ENCODE measurements at regions of chr11 and their contacts with region 1.

Region 1: GRCh38 chr11:122853971-122854446 is 15.7 kb downstream of the CRTAM start:
- DNase-seq: peak; percentile 31
- H3K4me3 Mint-ChIP-seq: no peak overlapping the region
- H3K27ac Mint-ChIP-seq: no peak overlapping the region
- H3K4me1 Mint-ChIP-seq: peaks cover 31% of the 10 kb centered on the region
- H3K27me3 Mint-ChIP-seq: peaks cover 31% of the 10 kb centered on the region

Region 2: DNA sequence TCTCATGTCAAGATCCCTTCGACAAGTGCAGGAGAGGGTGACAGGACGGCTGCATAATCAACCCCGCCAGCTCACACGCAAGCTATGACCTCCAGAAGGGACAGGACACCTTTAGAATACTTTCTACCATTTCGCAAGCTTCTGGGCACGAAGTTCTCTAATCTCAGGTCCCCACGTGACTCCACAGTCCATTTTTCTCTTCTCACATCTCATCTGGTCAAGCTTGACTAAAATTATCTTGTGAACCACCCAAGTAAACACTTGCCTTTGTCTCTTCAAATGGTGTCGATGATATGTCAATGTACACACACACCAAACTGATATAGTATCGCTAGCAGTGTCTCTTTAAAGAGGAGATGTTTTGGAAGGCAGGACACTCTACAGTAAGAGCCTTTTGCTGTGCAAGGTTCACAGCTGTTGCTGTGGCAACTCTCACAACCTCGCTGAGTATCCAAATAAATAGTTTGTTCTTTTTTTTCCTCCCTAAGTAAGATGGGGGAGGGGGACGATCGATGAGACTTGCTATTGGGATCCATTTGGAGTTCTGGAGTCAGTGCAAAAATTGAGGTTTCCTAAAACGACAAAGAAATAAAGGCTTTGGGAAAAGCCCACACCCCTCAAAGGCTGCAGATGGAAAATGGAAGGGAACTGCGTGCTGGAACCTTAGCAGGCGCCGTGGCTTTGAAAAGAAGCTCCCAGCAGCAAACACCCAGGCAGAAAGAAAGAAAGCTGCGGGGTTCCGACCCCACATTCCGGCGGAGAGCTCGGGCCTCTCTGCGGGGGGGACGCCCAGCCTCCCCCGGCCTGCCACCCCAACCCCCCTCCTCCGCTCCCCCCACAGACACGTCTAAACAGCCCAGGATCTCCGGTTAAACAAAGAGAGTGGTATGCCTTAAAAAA is 413.8 kb before region 1 on chr11:
- CTCF ChIA-PET with region 1: no interaction called
- POLR2A ChIA-PET with region 1: no interaction called
- DNase-seq: no peak
- H3K4me3 Mint-ChIP-seq: no peak overlapping the region
- H3K27ac Mint-ChIP-seq: no peak overlapping the region
- H3K4me1 Mint-ChIP-seq: no peaks in the 10 kb centered on the region
- H3K27me3 Mint-ChIP-seq: peaks cover 12% of the 10 kb centered on the region

Region 3: DNA sequence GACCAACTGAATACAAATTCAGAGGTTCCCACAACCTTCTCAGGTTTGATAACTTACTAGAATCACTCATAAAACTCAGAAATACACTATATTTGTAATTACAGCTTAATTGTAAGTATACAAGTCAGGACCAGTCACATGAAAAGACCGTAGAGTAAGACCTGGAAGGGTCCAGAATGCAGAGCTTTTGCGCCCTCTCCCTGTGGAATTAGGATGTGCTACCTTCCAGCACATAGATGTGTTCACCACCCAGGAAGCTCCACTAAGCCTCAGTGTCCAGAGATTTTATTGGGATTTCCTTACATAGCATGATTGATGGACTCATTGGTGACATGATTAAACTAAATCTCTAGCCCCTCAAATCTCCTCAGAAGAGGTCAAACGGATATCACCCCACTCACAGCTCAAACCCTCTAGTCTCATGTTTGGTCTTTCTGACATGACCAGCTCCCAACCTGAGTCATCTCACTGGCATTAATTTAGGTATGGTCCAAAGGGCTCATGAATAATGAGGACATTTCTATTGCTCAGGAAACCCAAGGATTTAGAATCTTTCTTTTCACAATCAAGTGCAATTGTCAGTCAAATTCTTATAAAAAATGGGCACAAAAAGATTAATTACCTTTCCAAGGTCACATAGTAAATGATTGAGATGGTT is 275.7 kb before region 1 on chr11:
- CTCF ChIA-PET with region 1: interaction called, 36 read pairs
- POLR2A ChIA-PET with region 1: interaction called, 3 read pairs
- DNase-seq: no peak
- H3K4me3 Mint-ChIP-seq: no peak overlapping the region
- H3K27ac Mint-ChIP-seq: no peak overlapping the region
- H3K4me1 Mint-ChIP-seq: peaks cover 5% of the 10 kb centered on the region
- H3K27me3 Mint-ChIP-seq: peaks cover 16% of the 10 kb centered on the region

Region 4: DNA sequence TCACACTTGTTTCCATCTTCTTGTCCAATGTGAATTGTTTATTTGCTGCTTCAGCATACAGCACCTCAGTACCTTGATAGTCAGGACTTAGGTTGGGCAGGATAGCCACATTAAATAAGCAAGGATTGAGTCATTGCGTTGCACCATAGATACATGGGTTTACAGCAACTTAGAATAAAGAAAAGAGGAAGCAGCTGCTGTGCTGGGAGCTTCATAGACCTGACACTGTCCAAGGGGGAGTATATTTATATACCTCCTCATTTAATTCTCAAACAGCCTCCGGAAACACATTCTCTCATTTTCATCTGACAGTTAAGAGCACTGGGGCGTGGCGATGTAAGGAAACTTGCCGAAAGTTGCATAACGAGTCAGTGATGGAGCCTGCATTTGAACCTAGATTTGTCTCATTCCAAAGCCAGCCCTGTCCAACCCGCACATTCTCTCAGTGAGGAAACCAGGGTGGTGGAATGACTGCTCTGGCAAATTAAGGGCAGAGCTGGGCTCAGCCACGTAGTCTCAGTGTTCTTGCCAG is 156.3 kb before region 1 on chr11:
- CTCF ChIA-PET with region 1: no interaction called
- POLR2A ChIA-PET with region 1: no interaction called
- DNase-seq: peak; percentile 48
- H3K4me3 Mint-ChIP-seq: peak overlapping the region; percentile 46
- H3K27ac Mint-ChIP-seq: peak overlapping the region; percentile 92
- H3K4me1 Mint-ChIP-seq: peaks cover 52% of the 10 kb centered on the region
- H3K27me3 Mint-ChIP-seq: no peaks in the 10 kb centered on the region

Region 5: GRCh38 chr11:122781378-122782195 is 72.4 kb before region 1 on chr11:
- CTCF ChIA-PET with region 1: interaction called, 18 read pairs
- POLR2A ChIA-PET with region 1: no interaction called
- DNase-seq: peak; percentile 74
- H3K4me3 Mint-ChIP-seq: no peak overlapping the region
- H3K27ac Mint-ChIP-seq: no peak overlapping the region
- H3K4me1 Mint-ChIP-seq: peaks cover 4% of the 10 kb centered on the region
- H3K27me3 Mint-ChIP-seq: no peaks in the 10 kb centered on the region

Region 6: DNA sequence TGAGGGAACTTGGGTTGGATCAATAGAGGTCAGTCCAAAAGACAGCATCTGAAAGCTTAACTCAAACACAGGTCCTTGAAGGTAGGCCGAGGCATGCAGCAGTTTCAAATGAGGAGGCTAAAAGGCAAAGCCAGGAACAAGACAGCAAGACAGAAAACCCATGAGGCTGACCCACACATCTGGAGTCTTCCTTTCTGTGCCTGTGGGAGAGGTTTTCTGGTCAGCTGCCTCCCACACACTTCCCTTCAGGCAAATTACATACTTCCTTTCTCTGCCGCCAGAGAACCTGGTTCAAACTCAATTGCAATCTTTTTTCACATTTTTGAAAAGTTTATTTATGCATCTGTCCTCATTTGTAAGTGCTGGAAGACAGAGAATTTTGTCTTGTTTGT is 45.5 kb before region 1 on chr11:
- CTCF ChIA-PET with region 1: interaction called, 21 read pairs
- POLR2A ChIA-PET with region 1: no interaction called
- DNase-seq: no peak
- H3K4me3 Mint-ChIP-seq: no peak overlapping the region
- H3K27ac Mint-ChIP-seq: no peak overlapping the region
- H3K4me1 Mint-ChIP-seq: peaks cover 13% of the 10 kb centered on the region
- H3K27me3 Mint-ChIP-seq: no peaks in the 10 kb centered on the region

Region 7: DNA sequence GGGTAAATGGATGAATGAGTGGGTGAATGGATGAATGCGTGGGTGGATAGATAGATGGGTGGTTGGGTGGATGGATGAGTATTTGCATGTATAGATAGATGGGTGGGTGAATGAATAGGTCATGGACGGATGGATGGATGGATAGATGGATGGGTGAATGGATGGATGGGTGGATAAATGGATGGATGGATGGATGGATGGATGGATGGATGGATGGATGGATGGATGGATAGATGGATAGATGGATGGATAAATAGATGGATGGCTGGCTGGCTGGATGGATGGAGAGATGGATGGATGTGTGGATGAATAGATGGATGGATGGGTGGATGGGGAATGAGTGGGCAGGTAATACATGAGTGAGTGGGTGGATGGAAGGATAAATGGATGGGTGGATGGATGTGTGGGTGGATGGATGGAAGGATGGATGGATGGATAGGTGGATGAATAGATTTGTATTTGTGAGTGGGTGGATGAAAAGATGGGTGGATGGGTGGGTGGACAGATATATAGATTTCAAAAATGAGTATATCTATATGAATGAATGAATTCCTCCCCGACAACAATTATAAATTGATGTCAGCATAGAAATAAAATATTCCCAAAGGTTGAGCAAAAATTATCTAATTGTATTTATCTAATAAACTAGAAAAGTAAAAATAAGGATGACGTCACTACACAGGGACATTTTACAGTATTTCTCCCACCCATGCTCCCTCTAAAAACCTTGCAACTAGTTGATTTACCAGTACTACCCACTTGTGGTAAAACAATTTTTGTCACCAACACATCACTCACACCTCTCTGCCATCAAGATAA is 16.3 kb before region 1 on chr11:
- CTCF ChIA-PET with region 1: interaction called, 22 read pairs
- POLR2A ChIA-PET with region 1: interaction called, 4 read pairs
- DNase-seq: no peak
- H3K4me3 Mint-ChIP-seq: no peak overlapping the region
- H3K27ac Mint-ChIP-seq: no peak overlapping the region
- H3K4me1 Mint-ChIP-seq: peaks cover 4% of the 10 kb centered on the region
- H3K27me3 Mint-ChIP-seq: peaks cover 11% of the 10 kb centered on the region

Region 8: GRCh38 chr11:123011510-123011909 is 157.5 kb after region 1 on chr11:
- CTCF ChIA-PET with region 1: no interaction called
- POLR2A ChIA-PET with region 1: no interaction called
- DNase-seq: no peak
- H3K4me3 Mint-ChIP-seq: no peak overlapping the region
- H3K27ac Mint-ChIP-seq: no peak overlapping the region
- H3K4me1 Mint-ChIP-seq: no peaks in the 10 kb centered on the region
- H3K27me3 Mint-ChIP-seq: peaks cover 17% of the 10 kb centered on the region

Region 9: GRCh38 chr11:123122341-123122740 is 268.3 kb after region 1 on chr11:
- CTCF ChIA-PET with region 1: no interaction called
- POLR2A ChIA-PET with region 1: no interaction called
- DNase-seq: no peak
- H3K4me3 Mint-ChIP-seq: no peak overlapping the region
- H3K27ac Mint-ChIP-seq: no peak overlapping the region
- H3K4me1 Mint-ChIP-seq: peaks cover 11% of the 10 kb centered on the region
- H3K27me3 Mint-ChIP-seq: peaks cover 2% of the 10 kb centered on the region

Measured in activated CD4-positive, alpha-beta memory T cell treated with anti-CD3 and anti-CD28 coated beads, Interleukin-2, amount 10 ng/mL, durations not matched to agents 7 days and 5 days (primary cell).